ENCODE measurements at regions of chr12 and their contacts with region 1.

Region 1: DNA sequence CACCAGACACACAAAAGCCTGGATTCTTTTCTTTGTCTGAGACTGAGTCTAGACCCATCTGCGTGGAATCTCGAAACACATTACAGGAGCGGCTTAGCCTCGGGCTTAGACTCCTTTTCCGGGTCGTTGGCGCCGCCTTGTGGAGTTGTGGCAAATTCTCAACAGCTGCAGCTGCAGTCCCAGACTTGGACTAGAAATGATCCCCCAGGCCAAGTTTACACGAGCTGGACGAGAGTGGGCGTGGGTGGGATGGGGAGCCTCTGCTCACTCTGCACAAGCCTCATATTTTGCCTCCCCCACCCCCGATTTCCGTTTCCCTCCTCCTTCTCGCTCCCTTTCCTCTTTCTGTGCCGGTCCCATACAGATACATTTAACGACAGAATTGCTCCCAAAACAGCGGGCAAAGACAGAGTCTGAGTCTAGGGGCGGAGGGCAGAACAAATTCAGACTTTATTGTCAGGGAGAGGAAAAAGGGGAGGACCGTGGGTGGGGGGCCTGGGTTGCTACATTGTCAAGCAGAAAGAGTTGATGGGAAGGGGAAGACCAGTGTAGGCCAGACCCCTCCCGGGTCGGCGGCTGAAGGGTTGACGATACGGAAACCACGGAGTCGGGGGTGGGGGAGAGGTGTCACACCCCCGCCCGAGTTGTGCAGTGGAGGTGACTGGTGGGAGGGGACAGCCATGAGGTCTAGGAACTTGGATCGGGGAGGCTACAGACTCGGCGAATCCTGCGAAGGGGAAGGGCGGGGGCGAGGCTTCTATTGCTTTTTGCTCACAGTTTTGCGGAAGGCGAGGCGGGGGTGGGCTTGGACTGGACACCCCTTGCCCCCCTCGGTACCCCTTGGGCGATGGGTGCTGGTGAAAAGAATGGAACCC is 4.7 kb upstream of the GPR84 start:
- DNase-seq: peak; percentile 93
- H3K4me3 Mint-ChIP-seq: no peak overlapping the region
- H3K27ac Mint-ChIP-seq: no peak overlapping the region
- H3K4me1 Mint-ChIP-seq: peaks cover 40% of the 10 kb centered on the region
- H3K27me3 Mint-ChIP-seq: peaks cover 3% of the 10 kb centered on the region

Region 2: GRCh38 chr12:54005853-54006686 is 362.9 kb before region 1 on chr12:
- CTCF ChIA-PET with region 1: no interaction called
- POLR2A ChIA-PET with region 1: no interaction called
- intact Hi-C with region 1: loop called (anchors 10 kb)
- DNase-seq: peak; percentile 89
- H3K4me3 Mint-ChIP-seq: peak overlapping the region; percentile 68
- H3K27ac Mint-ChIP-seq: no peak overlapping the region
- H3K4me1 Mint-ChIP-seq: peaks cover 22% of the 10 kb centered on the region
- H3K27me3 Mint-ChIP-seq: peaks cover 91% of the 10 kb centered on the region

Region 3: DNA sequence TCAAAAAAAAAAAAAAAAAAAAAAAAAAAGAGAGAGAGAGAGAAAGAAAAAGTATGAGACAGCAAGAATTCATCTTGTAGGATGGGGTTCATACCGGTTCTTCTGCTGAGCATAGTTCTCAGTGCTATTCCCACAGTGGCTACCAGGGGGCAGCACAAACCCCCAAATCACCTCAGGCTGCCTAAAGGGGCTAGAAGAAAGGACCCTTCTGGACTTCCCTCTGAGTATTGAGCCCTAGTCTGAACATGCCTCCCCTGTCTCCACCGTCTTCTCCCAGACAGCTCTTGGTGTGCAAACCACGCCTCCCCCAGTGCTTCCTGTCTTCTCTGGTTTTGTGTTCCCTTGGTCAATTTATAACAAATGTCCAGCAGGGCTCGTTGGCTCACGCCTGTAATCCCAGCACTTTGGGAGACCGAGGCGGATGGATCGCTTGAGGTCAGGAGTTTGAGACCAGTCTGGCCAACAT is 148.8 kb before region 1 on chr12:
- CTCF ChIA-PET with region 1: interaction called, 36 read pairs
- POLR2A ChIA-PET with region 1: interaction called, 3 read pairs
- intact Hi-C with region 1: loop called (anchors 1 kb)
- DNase-seq: peak; percentile 84
- H3K4me3 Mint-ChIP-seq: no peak overlapping the region
- H3K27ac Mint-ChIP-seq: no peak overlapping the region
- H3K4me1 Mint-ChIP-seq: peaks cover 18% of the 10 kb centered on the region
- H3K27me3 Mint-ChIP-seq: no peaks in the 10 kb centered on the region

Region 4: GRCh38 chr12:54294152-54294952 is 74.6 kb before region 1 on chr12:
- CTCF ChIA-PET with region 1: interaction called, 96 read pairs
- POLR2A ChIA-PET with region 1: no interaction called
- intact Hi-C with region 1: loop called (anchors 1 kb)
- DNase-seq: peak; percentile 79
- H3K4me3 Mint-ChIP-seq: no peak overlapping the region
- H3K27ac Mint-ChIP-seq: no peak overlapping the region
- H3K4me1 Mint-ChIP-seq: peaks cover 3% of the 10 kb centered on the region
- H3K27me3 Mint-ChIP-seq: peaks cover 2% of the 10 kb centered on the region

Region 5: DNA sequence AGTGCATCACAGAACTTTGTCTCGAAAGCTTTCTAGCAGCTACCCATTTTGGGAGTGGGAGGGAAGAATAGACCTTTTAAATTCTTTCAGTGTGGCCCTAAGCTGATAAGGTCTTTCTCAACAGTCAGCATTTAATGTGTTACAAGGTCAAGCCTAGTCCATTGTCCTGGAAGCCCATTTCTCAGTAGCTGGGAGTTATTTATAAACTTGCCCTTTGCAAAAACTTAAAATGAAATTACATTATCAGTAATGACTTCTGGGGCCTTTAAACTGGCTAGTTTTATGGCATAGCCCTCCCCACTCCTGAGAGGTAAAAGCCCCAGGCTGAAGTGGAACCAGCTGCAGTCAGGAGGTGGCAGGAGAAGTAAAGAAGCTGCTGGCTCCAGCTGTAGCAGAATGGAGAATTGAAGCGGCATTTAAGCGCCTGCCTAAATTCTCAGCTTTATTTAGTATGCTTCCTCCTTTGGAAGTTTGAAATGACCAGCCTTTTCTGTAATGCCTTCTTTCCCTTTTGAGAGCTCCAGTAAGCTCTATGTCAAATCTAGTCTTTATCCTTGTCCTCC is 31.6 kb before region 1 on chr12:
- CTCF ChIA-PET with region 1: interaction called, 30 read pairs
- POLR2A ChIA-PET with region 1: no interaction called
- intact Hi-C with region 1: loop called (anchors 1 kb)
- DNase-seq: no peak
- H3K4me3 Mint-ChIP-seq: no peak overlapping the region
- H3K27ac Mint-ChIP-seq: no peak overlapping the region
- H3K4me1 Mint-ChIP-seq: peaks cover 18% of the 10 kb centered on the region
- H3K27me3 Mint-ChIP-seq: no peaks in the 10 kb centered on the region

Region 6: DNA sequence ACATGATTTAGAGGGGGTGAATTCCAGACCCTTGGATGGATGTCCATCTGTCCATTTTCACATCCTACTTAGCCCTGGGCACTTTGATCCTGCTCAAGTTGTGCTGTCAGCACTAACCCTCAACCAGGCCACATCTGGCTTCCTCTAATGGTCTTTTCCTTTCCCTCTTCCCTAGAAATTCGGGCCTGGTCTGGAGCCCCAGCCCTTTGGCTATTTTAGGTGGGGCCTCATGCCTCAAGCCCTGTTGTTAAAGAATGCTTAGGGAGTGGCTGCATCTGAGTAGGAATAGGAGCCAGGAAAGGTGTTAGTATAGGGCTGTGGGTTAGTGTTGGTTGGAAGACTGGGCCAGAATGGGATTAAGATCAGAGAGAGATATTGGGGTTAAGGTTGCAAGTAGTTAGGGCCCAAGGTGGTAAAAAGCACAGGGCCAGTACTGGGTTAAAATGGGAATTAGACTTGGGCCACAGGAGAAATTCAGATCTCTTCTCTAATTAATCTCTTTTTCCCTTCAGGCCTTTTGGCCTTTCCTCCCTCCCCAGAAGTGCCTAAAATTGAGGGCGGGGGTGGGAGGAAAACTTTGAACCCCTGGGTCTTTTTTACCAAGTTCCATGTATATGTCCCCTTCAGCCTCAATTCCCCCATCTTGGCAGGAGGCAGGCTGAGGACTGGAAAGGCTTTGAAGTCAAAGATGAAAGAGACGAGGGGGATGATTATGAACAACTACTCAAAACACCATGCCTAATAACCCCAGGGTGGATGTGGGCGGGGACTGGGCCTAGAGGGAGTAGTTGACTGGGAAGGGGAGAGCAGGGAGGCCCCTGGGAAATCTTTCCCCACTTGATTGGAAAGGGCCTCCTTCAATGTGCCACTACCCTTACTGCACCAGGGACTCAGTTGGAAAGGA is 19.5 kb after region 1 on chr12:
- CTCF ChIA-PET with region 1: interaction called, 11 read pairs
- POLR2A ChIA-PET with region 1: interaction called, 4 read pairs
- intact Hi-C with region 1: no loop called
- DNase-seq: no peak
- H3K4me3 Mint-ChIP-seq: no peak overlapping the region
- H3K27ac Mint-ChIP-seq: no peak overlapping the region
- H3K4me1 Mint-ChIP-seq: peaks cover 14% of the 10 kb centered on the region
- H3K27me3 Mint-ChIP-seq: no peaks in the 10 kb centered on the region

Region 7: GRCh38 chr12:54463034-54463433 is 94.1 kb after region 1 on chr12:
- CTCF ChIA-PET with region 1: no interaction called
- POLR2A ChIA-PET with region 1: no interaction called
- intact Hi-C with region 1: no loop called
- DNase-seq: no peak
- H3K4me3 Mint-ChIP-seq: no peak overlapping the region
- H3K27ac Mint-ChIP-seq: no peak overlapping the region
- H3K4me1 Mint-ChIP-seq: peaks cover 7% of the 10 kb centered on the region
- H3K27me3 Mint-ChIP-seq: peaks cover 11% of the 10 kb centered on the region

Region 8: GRCh38 chr12:54998958-54999510 is 630.1 kb after region 1 on chr12:
- CTCF ChIA-PET with region 1: no interaction called
- POLR2A ChIA-PET with region 1: no interaction called
- intact Hi-C with region 1: no loop called
- DNase-seq: no peak
- H3K4me3 Mint-ChIP-seq: no peak overlapping the region
- H3K27ac Mint-ChIP-seq: no peak overlapping the region
- H3K4me1 Mint-ChIP-seq: peaks cover 7% of the 10 kb centered on the region
- H3K27me3 Mint-ChIP-seq: no peaks in the 10 kb centered on the region

Measured in activated CD4-positive, alpha-beta memory T cell treated with anti-CD3 and anti-CD28 coated beads for 36 hours (primary cell).